ENCODE measurements at regions of chr19 and their contacts with region 1.

Region 1: GRCh38 chr19:2668175-2668763 is 34.2 kb downstream of the GNG7 start:
- DNase-seq: no peak
- H3K4me3 ChIP-seq: no peak overlapping the region
- H3K27ac ChIP-seq: no peak overlapping the region
- H3K4me1 ChIP-seq: no peaks in the 10 kb centered on the region
- H3K27me3 ChIP-seq: peaks cover 20% of the 10 kb centered on the region; the same call in 1 of the 2 replicates
- CTCF ChIP-seq: no peak

Region 2: GRCh38 chr19:2700660-2701360 is 32.5 kb after region 1 on chr19:
- CTCF ChIA-PET with region 1: interaction called, 23 read pairs
- POLR2A ChIA-PET with region 1: interaction called, 8 read pairs
- intact Hi-C with region 1: no loop called
- DNase-seq: no peak
- H3K4me3 ChIP-seq: no peak overlapping the region
- H3K27ac ChIP-seq: no peak overlapping the region
- H3K4me1 ChIP-seq: no peaks in the 10 kb centered on the region
- H3K27me3 ChIP-seq: 0 out of 2 replicates have a peak, but pooled peaks cover 4% of the 10 kb centered on the region
- CTCF ChIP-seq: no peak

Measured in PC-9 (cell line).